ENCODE measurements at regions of chr12 and their contacts with region 1.

Region 1: GRCh38 chr12:96237465-96238077 is 43.4 kb downstream of the ELK3 start:
- DNase-seq: no peak
- H3K4me3 ChIP-seq: peak overlapping the region in 1 of 2 experiments; percentile 8; a peak in 1 of 4 replicates
- H3K27ac ChIP-seq: peak overlapping the region; percentile 29 to 89; a peak in 3 of 4 replicates
- H3K4me1 ChIP-seq: peaks cover 33 to 58% of the 10 kb centered on the region in 2 experiments
- H3K27me3 ChIP-seq: no peaks in the 10 kb centered on the region
- CTCF ChIP-seq: peak; percentile 10; the same call in 1 of the 2 replicates
- EP300 ChIP-seq: peak in 1 of 2 experiments; percentile 69; a peak in 1 of 4 replicates
- RAD21 ChIP-seq: no peak

Region 2: GRCh38 chr12:96249196-96250118 is 11.9 kb after region 1 on chr12:
- CTCF ChIA-PET with region 1: interaction called, 15 read pairs
- POLR2A ChIA-PET with region 1: no interaction called
- DNase-seq: peak; percentile 35
- H3K4me3 ChIP-seq: no peak overlapping the region
- H3K27ac ChIP-seq: peak overlapping the region in 1 of 2 experiments; percentile 25; a peak in 1 of 4 replicates
- H3K4me1 ChIP-seq: peaks cover 7 to 19% of the 10 kb centered on the region in 2 experiments; a peak in 2 of 4 replicates
- H3K27me3 ChIP-seq: no peaks in the 10 kb centered on the region
- CTCF ChIP-seq: no peak
- EP300 ChIP-seq: no peak
- RAD21 ChIP-seq: no peak

Region 3: GRCh38 chr12:96274331-96274730 is 36.8 kb after region 1 on chr12:
- CTCF ChIA-PET with region 1: no interaction called
- POLR2A ChIA-PET with region 1: no interaction called
- DNase-seq: no peak
- H3K4me3 ChIP-seq: no peak overlapping the region
- H3K27ac ChIP-seq: peak overlapping the region in 1 of 2 experiments; percentile 57; a peak in 2 of 4 replicates
- H3K4me1 ChIP-seq: no peaks in the 10 kb centered on the region; a peak in 1 of 4 replicates
- H3K27me3 ChIP-seq: no peaks in the 10 kb centered on the region
- CTCF ChIP-seq: no peak
- EP300 ChIP-seq: no peak
- RAD21 ChIP-seq: no peak

Region 4: GRCh38 chr12:96285158-96285557 is 47.6 kb after region 1 on chr12:
- CTCF ChIA-PET with region 1: no interaction called
- POLR2A ChIA-PET with region 1: no interaction called
- DNase-seq: no peak
- H3K4me3 ChIP-seq: no peak overlapping the region
- H3K27ac ChIP-seq: peak overlapping the region in 1 of 2 experiments; percentile 10; a peak in 1 of 4 replicates
- H3K4me1 ChIP-seq: no peaks in the 10 kb centered on the region
- H3K27me3 ChIP-seq: no peaks in the 10 kb centered on the region
- CTCF ChIP-seq: no peak
- EP300 ChIP-seq: no peak
- RAD21 ChIP-seq: no peak

Region 5: DNA sequence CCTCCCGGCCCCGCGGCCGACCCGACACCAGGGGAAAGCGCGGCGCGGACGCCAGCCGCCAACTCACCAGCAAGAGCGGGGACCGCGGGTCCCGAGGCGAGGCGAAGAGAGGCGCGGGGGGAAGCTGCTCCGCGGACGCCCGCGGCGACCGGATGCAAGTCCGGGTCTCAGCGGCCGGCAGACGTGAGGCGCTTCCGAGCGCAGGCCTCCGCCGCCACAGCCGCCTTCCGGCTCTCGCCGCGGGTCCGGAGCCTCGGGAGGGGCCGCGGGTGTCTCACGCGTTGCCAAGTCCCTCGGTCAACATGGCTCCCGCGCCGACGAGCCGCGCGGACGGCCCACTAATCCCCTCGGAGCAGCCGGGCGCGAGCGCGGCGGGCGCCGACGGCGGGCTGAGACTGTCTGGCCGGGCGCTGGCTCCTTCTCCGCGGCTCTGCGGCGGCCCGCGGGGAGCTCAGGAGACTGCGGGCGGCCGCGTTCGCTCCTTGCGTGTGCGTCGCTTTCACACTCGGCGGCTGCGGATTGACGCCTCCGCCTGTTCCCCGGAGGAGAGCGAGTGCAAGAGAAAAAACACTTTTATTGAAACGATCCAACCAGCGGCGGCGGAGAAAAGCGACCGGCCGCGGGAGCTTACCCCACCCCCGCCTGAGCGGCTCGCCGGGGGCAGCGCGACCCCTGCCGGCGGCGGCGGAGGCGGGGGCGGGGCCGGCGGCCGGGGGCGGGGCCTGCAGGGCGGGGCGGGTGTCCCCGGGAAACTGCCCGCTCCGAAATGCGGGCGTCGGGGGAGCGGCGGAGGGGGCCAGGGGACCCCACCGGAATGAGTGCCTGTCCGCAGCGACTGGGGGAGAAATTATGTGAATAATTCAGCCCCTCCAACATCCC is 162.6 kb after region 1 on chr12 and contains the start of gene CDK17:
- CTCF ChIA-PET with region 1: interaction called, 33 read pairs
- POLR2A ChIA-PET with region 1: interaction called, 18 read pairs
- DNase-seq: peak; percentile 97
- H3K4me3 ChIP-seq: peak within 1 kb of the TSS; percentile 88 to 90
- H3K27ac ChIP-seq: peak within 1 kb of the TSS; percentile 93 to 97
- H3K4me1 ChIP-seq: peaks cover 2 to 15% of the 10 kb centered on the region in 2 experiments; a peak in 2 of 4 replicates
- H3K27me3 ChIP-seq: no peaks in the 10 kb centered on the region
- CTCF ChIP-seq: peak; percentile 39
- EP300 ChIP-seq: 0 out of 4 replicates have a peak, but pooled peaks of 1 of the 2 experiments have one; percentile 31
- RAD21 ChIP-seq: peak; percentile 44
- polyA plus RNA-seq, gene CDK17: 11.7 and 12.4 TPM in 2 replicates

Measured in SK-N-SH (cell line).